T-cell (primary cell): ENCODE measurements at regions of chr12 and their contacts with region 1.

Region 1: DNA sequence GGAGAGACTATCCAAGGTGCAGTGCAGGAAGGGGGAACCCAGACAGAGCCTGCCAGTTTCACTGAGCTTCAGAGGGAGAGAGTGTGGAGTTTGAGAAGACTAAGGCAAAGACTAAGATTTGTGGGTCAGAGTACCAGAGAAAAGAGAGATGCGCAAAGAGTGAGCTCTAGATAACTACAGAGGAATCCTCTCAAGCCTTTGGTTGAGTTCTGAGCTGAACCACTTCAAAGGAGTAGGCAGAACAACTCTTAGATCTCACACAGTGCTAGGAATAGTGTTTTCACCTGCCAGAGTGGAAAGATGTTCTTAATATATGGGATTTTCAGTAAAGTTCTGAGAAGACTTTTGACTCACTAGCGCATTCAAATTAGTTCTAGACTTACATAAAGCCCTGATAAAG is 10.7 kb upstream of the M6PR start:
- DNase-seq: peak in 3 of 35 experiments; percentile 8 to 63 (median 11)
- ATAC-seq: peak; percentile 95 to 100 (median 99)
- H3K4me3 ChIP-seq: no peak overlapping the region
- H3K4me3 Mint-ChIP-seq: peak overlapping the region; percentile 17 to 50 (median 26)
- H3K27ac ChIP-seq: peak overlapping the region; percentile 34
- H3K27ac Mint-ChIP-seq: peak overlapping the region; percentile 93 to 97
- H3K4me1 ChIP-seq: peaks cover 41 to 54% of the 10 kb centered on the region in 2 experiments
- H3K4me1 Mint-ChIP-seq: peaks cover 57 to 85% (median 75%) of the 10 kb centered on the region in 3 donors
- H3K27me3 ChIP-seq: no peaks in the 10 kb centered on the region
- H3K27me3 Mint-ChIP-seq: no peaks in the 10 kb centered on the region

Region 2: DNA sequence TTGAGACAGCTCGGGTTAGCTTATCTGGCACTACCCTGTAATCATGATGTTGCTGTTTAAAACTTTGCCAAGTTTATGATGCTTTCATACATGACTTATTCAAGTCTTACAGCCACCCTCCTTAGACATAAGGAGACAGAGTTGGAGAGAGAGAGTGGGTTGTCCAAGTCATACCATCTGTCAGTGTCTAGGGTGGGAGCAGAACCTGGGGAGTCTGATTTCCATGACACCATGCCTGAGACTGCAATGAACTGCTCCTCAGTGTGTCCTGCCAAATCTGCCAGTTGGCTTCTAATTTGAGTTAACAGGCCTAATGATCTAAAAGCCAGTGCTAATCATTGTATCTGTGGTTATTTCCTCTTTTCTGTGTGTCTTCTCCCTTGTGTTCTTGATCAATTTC is 89.6 kb before region 1 on chr12:
- CTCF ChIA-PET with region 1: no interaction called
- POLR2A ChIA-PET with region 1: no interaction called
- DNase-seq: no peak
- ATAC-seq: no peak
- H3K4me3 ChIP-seq: no peak overlapping the region
- H3K4me3 Mint-ChIP-seq: no peak overlapping the region
- H3K27ac ChIP-seq: no peak overlapping the region
- H3K27ac Mint-ChIP-seq: no peak overlapping the region
- H3K4me1 ChIP-seq: no peaks in the 10 kb centered on the region
- H3K4me1 Mint-ChIP-seq: no peaks in the 10 kb centered on the region
- H3K27me3 ChIP-seq: no peaks in the 10 kb centered on the region
- H3K27me3 Mint-ChIP-seq: no peaks in the 10 kb centered on the region

Region 3: DNA sequence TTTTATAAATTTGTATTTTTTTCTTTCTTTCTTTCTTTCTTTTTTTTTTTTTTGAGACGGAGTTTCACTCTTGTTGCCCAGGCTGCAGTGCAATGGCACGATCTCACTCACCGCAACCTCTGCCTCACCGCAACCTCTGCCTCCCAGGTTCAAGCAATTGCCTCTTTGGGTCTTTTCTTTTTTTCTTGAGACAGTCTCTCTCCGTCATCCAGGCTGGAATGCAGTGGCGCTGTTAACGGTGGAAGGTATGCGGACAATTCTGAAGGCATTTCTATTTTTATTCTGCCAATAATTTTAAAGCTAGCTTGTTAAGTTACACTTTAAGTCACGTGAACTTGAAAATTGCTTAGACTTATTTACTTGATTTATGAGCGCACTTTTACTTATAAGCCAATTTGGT is 54.6 kb before region 1 on chr12:
- CTCF ChIA-PET with region 1: no interaction called
- POLR2A ChIA-PET with region 1: no interaction called
- DNase-seq: no peak
- ATAC-seq: no peak
- H3K4me3 ChIP-seq: no peak overlapping the region
- H3K4me3 Mint-ChIP-seq: no peak overlapping the region
- H3K27ac ChIP-seq: no peak overlapping the region
- H3K27ac Mint-ChIP-seq: no peak overlapping the region
- H3K4me1 ChIP-seq: no peaks in the 10 kb centered on the region
- H3K4me1 Mint-ChIP-seq: peaks cover 0 to 3% (median 0%) of the 10 kb centered on the region in 3 donors
- H3K27me3 ChIP-seq: peaks cover 0 to 3% of the 10 kb centered on the region in 2 experiments
- H3K27me3 Mint-ChIP-seq: peaks cover 0 to 5% of the 10 kb centered on the region in 2 donors

Region 4: GRCh38 chr12:9039397-9039977 is 79.3 kb after region 1 on chr12:
- CTCF ChIA-PET with region 1: interaction called, 3 to 6 read pairs
- POLR2A ChIA-PET with region 1: interaction called, 3 to 11 read pairs
- DNase-seq: peak in 7 of 35 experiments; percentile 11 to 75 (median 24)
- ATAC-seq: peak; percentile 70 to 86 (median 80)
- H3K4me3 ChIP-seq: no peak overlapping the region
- H3K4me3 Mint-ChIP-seq: peak overlapping the region in 1 of 3 donors; percentile 16
- H3K27ac ChIP-seq: peak overlapping the region; percentile 40
- H3K27ac Mint-ChIP-seq: peak overlapping the region; percentile 80 to 92
- H3K4me1 ChIP-seq: peaks cover 34 to 35% of the 10 kb centered on the region in 2 experiments
- H3K4me1 Mint-ChIP-seq: peaks cover 41 to 73% (median 70%) of the 10 kb centered on the region in 3 donors
- H3K27me3 ChIP-seq: no peaks in the 10 kb centered on the region
- H3K27me3 Mint-ChIP-seq: no peaks in the 10 kb centered on the region

Region 5: GRCh38 chr12:9169979-9170634 is 209.9 kb after region 1 on chr12:
- CTCF ChIA-PET with region 1: no interaction called
- POLR2A ChIA-PET with region 1: no interaction called
- DNase-seq: no peak
- ATAC-seq: no peak
- H3K4me3 ChIP-seq: no peak overlapping the region
- H3K4me3 Mint-ChIP-seq: no peak overlapping the region
- H3K27ac ChIP-seq: no peak overlapping the region
- H3K27ac Mint-ChIP-seq: no peak overlapping the region
- H3K4me1 ChIP-seq: no peaks in the 10 kb centered on the region
- H3K4me1 Mint-ChIP-seq: no peaks in the 10 kb centered on the region
- H3K27me3 ChIP-seq: no peaks in the 10 kb centered on the region
- H3K27me3 Mint-ChIP-seq: no peaks in the 10 kb centered on the region

Region 6: DNA sequence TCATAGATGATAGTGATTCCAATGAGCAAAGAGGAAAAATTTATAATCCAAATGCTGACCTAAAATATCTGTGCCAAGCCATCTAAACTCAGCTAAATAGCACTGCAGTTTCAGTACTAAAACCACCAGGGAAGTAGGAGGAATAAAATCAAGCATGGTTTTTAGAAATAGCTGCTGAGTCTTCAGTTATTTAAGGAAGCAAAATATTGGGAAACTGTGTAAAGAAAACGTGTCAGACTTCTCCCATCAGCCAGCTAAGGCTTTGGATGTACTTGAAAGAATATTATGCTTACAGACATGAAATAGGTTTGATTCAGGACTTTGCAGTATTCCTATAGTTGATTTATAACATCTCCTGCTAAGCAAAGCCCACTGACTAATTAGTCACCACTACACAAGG is 734.1 kb after region 1 on chr12:
- CTCF ChIA-PET with region 1: interaction called in 1 of 2 experiments, 12 read pairs
- POLR2A ChIA-PET with region 1: no interaction called
- DNase-seq: no peak
- ATAC-seq: no peak
- H3K4me3 ChIP-seq: no peak overlapping the region
- H3K4me3 Mint-ChIP-seq: no peak overlapping the region
- H3K27ac ChIP-seq: peak overlapping the region; percentile 15
- H3K27ac Mint-ChIP-seq: peak overlapping the region in 1 of 2 donors; percentile 57
- H3K4me1 ChIP-seq: peaks cover 4 to 5% of the 10 kb centered on the region in 2 experiments
- H3K4me1 Mint-ChIP-seq: peaks cover 26 to 45% (median 35%) of the 10 kb centered on the region in 3 donors
- H3K27me3 ChIP-seq: no peaks in the 10 kb centered on the region
- H3K27me3 Mint-ChIP-seq: no peaks in the 10 kb centered on the region